Gastrocnemius medialis (tissue), 4 donors: ENCODE measurements at regions of chr13 and their contacts with region 1.

Region 1: GRCh38 chr13:38763439-38764381 is 76.8 kb downstream of the FREM2 start:
- DNase-seq: no peak
- ATAC-seq: peak in 1 of 2 donors; percentile 78
- H3K4me3 ChIP-seq: no peak overlapping the region
- H3K27ac ChIP-seq: no peak overlapping the region
- H3K4me1 ChIP-seq: peaks cover 4 to 5% of the 10 kb centered on the region in 2 donors
- H3K27me3 ChIP-seq: no peaks in the 10 kb centered on the region
- CTCF ChIP-seq: peak; percentile 36 to 67 (median 56)
- POLR2A ChIP-seq: no peak

Region 2: DNA sequence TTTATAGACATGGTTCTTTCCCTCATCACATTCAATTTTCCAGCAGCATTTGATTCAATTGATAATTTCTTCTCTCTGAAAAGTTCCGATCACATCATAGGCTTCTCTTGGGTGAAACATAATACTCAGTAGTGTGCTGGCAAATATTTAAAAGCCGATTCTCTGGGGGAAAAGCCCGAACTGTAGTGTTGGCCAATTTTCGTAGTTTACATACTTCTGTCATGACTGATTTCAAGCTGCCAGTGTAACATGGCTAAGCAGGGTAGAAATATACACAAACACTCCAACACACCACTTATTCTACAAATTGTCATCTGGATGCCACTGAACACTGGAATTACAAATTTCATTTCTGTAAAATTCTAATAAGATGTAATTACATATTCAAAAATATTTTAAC is 132.9 kb before region 1 on chr13:
- in situ Hi-C with region 1: no loop called
- intact Hi-C with region 1: no loop called
- DNase-seq: no peak
- ATAC-seq: no peak
- H3K4me3 ChIP-seq: no peak overlapping the region
- H3K27ac ChIP-seq: no peak overlapping the region
- H3K4me1 ChIP-seq: no peaks in the 10 kb centered on the region
- H3K27me3 ChIP-seq: no peaks in the 10 kb centered on the region
- CTCF ChIP-seq: no peak
- POLR2A ChIP-seq: no peak

Region 3: GRCh38 chr13:38670627-38671026 is 93.1 kb before region 1 on chr13:
- in situ Hi-C with region 1: loop called in 1 of 4 experiments (anchors 5 kb)
- intact Hi-C with region 1: no loop called
- DNase-seq: no peak
- ATAC-seq: no peak
- H3K4me3 ChIP-seq: no peak overlapping the region
- H3K27ac ChIP-seq: no peak overlapping the region
- H3K4me1 ChIP-seq: no peaks in the 10 kb centered on the region
- H3K27me3 ChIP-seq: peaks cover 0 to 4% (median 0%) of the 10 kb centered on the region in 3 donors
- CTCF ChIP-seq: no peak
- POLR2A ChIP-seq: no peak

Region 4: GRCh38 chr13:38686577-38687245 is 77.0 kb before region 1 on chr13 and contains the start of gene FREM2:
- in situ Hi-C with region 1: loop called in 2 of 4 experiments (anchors 5 to 10 kb)
- intact Hi-C with region 1: loop called (anchors 1 kb)
- DNase-seq: peak; percentile 38 to 65
- ATAC-seq: peak; percentile 80 to 89
- H3K4me3 ChIP-seq: peak within 1 kb of the TSS; percentile 63 to 70 (median 68)
- H3K27ac ChIP-seq: peak within 1 kb of the TSS; percentile 35 to 61 (median 55)
- H3K4me1 ChIP-seq: peaks cover 2 to 14% of the 10 kb centered on the region in 2 donors
- H3K27me3 ChIP-seq: no peaks in the 10 kb centered on the region
- CTCF ChIP-seq: no peak
- POLR2A ChIP-seq: peak; percentile 19 to 43
- total RNA-seq, gene FREM2: 1.3 to 6.4 (median 2.4) TPM

Region 5: DNA sequence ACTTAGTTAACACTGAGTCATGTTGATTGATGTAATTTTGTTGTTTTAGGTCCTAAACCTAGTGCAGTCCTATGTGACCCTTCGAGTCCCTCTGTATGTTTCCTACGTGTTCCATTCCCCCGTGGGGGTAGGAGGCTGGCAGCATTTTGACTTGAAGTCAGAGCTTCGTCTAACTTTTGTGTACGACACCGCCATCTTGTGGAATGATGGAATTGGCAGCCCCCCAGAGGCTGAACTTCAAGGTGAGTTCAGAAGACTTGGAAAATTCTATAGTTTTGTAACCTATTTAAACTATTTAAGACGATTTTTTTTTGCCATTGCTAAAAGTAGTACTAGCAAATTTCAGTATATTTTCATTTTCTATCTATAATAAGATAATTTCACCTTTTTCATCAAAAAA is 109.0 kb after region 1 on chr13:
- in situ Hi-C with region 1: no loop called
- intact Hi-C with region 1: loop called (anchors 5 kb)
- DNase-seq: peak; percentile 18 to 65
- ATAC-seq: peak; percentile 50 to 80
- H3K4me3 ChIP-seq: no peak overlapping the region
- H3K27ac ChIP-seq: no peak overlapping the region
- H3K4me1 ChIP-seq: peaks cover 9 to 15% of the 10 kb centered on the region in 2 donors
- H3K27me3 ChIP-seq: no peaks in the 10 kb centered on the region
- CTCF ChIP-seq: peak in 4 of 5 experiments; percentile 11 to 51 (median 46)
- POLR2A ChIP-seq: no peak

Region 6: DNA sequence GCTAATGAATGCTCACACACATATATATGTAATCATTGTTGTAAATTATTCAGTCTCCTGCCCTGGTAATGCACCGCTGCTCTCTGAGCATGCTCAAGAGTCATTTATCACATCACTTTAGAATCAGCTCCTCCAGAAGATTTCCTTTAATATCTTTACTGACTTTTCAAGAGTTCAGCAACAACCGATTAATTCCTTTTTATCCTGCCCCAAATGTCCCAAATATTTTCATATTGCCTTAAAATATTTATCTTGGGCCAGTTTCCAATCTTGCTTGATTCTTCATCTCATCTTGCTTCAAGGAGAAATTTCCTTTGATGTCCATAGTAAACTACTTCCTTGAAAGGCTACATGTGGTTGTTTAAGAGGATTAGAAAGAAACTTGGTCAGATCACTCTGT is 407.0 kb after region 1 on chr13:
- in situ Hi-C with region 1: no loop called
- intact Hi-C with region 1: no loop called
- DNase-seq: no peak
- ATAC-seq: no peak
- H3K4me3 ChIP-seq: no peak overlapping the region
- H3K27ac ChIP-seq: no peak overlapping the region
- H3K4me1 ChIP-seq: no peaks in the 10 kb centered on the region
- H3K27me3 ChIP-seq: no peaks in the 10 kb centered on the region
- CTCF ChIP-seq: no peak
- POLR2A ChIP-seq: no peak